Naive thymus-derived CD4-positive, alpha-beta T cell (primary cell): ENCODE measurements at regions of chr6 and their contacts with region 1.

Region 1: DNA sequence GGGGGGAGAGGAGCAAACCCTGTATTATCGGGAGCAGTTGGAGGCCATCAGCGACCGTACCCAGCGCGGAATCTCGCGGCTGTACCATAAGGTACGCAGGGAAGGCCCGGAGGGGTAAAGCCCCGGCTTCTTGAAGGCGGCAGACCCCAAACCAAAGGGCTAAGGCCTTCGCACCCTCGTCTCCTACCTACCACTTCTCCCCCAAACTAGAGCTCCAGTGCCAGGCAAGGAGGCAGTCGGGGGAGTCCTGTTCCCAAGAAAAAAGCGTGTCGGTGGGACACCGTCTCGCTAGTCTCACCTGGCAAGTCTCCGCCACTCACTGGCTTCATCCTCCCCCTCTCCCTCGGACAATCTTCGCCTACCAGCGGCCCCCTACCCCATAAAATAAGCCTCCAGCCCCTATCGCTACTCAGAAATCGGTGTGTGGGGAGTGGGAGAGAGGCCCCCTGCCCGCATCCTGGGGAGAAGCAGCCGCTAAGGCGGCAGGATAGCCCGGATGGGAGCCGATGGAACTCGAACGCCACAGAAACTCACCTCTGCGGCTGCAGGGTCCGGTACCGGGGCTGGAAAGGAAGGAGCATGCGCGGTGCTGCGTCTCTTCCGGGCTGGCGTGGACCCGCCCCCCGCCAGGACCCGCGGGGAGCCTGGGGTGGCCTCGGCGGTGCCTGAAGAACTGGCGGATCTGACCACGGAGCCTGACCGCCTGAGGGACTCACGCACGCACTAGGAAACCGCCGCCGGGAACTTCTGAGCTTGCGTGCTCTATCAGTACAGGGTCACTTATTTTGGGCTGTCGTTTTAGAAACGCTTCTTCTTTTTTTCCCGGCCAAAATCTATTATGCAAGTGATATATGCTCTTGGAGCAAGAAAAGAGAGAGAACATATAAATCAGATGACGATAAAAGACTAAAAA is at the start of gene RPS10:
- DNase-seq: peak; percentile 80 to 94 (median 88)
- ATAC-seq: peak; percentile 100
- H3K4me3 ChIP-seq: peak within 1 kb of the TSS; percentile 98
- H3K4me3 Mint-ChIP-seq: peak within 1 kb of the TSS; percentile 93 to 99 (median 97)
- H3K27ac ChIP-seq: peak within 1 kb of the TSS; percentile 93
- H3K27ac Mint-ChIP-seq: peak within 1 kb of the TSS; percentile 95 to 99 (median 98)
- H3K4me1 ChIP-seq: peaks cover 7 to 18% of the 10 kb centered on the region in 2 donors
- H3K4me1 Mint-ChIP-seq: peaks cover 13 to 43% (median 31%) of the 10 kb centered on the region in 7 donors
- H3K27me3 ChIP-seq: no peaks in the 10 kb centered on the region
- H3K27me3 Mint-ChIP-seq: peaks cover 0 to 3% (median 0%) of the 10 kb centered on the region in 5 donors
- total RNA-seq, gene RPS10: 1,466 to 3,151 (median 2,905) TPM

Region 2: DNA sequence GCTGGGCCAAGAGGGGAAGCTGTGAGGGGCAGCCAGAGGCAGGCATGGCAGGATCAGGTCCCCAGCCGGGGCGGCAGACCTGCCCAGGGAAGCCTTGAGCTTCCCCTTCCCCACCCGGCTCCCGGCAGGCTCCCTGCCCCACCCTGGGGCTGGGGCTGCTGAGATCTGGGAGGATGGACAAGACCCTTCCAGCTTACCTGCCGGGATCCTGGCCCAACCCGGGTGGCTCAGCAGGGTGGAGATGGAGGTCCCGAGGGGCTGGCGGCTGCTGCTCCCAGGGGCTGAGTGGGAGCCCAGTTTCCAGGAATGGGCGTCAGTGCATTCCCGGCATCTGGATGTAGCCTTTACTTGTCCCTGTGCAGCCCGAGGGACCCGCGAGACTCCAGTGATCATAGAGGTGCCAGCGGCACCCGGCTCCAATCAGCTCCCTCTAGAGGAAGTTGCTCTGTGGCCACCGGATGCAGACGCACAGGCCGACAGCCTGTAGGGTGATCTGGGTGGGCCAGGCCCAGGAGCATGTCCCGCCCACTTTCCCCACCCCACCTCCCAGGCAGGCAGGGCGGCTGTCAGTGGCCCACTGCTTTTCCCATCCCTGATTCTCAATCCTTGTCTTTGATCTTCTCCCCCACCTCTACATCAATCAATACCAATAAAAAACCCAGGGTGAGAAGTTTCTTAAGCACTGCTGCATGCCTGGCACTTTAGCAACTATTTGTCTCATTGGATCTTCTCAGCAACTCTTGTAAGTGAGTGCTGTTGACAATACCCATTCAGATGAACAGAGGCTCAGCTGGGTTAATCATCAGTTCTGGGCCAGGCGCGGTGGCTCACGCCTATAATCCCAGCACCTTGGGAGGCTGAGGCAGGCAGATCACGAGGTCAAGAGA is 845.7 kb before region 1 on chr6 and contains the start of gene BAK1:
- CTCF ChIA-PET with region 1: no interaction called
- POLR2A ChIA-PET with region 1: no interaction called
- intact Hi-C with region 1: no loop called
- DNase-seq: peak; percentile 54 to 86 (median 78)
- ATAC-seq: peak; percentile 98
- H3K4me3 ChIP-seq: peak within 1 kb of the TSS; percentile 92
- H3K4me3 Mint-ChIP-seq: peak within 1 kb of the TSS; percentile 93 to 99 (median 96)
- H3K27ac ChIP-seq: peak within 1 kb of the TSS; percentile 83
- H3K27ac Mint-ChIP-seq: peak within 1 kb of the TSS; percentile 94 to 99 (median 97)
- H3K4me1 ChIP-seq: peaks cover 13 to 25% of the 10 kb centered on the region in 2 donors
- H3K4me1 Mint-ChIP-seq: peaks cover 26 to 43% (median 39%) of the 10 kb centered on the region in 7 donors
- H3K27me3 ChIP-seq: no peaks in the 10 kb centered on the region
- H3K27me3 Mint-ChIP-seq: no peaks in the 10 kb centered on the region
- total RNA-seq, gene BAK1: 16.9 to 78.8 (median 22.0) TPM

Region 3: GRCh38 chr6:34223956-34224940 is 201.5 kb before region 1 on chr6:
- CTCF ChIA-PET with region 1: interaction called, 3 read pairs
- POLR2A ChIA-PET with region 1: interaction called, 12 read pairs
- intact Hi-C with region 1: no loop called
- DNase-seq: peak; percentile 85 to 97 (median 91)
- ATAC-seq: peak; percentile 99
- H3K4me3 ChIP-seq: peak overlapping the region; percentile 78
- H3K4me3 Mint-ChIP-seq: peak overlapping the region; percentile 42 to 85 (median 76)
- H3K27ac ChIP-seq: peak overlapping the region; percentile 93
- H3K27ac Mint-ChIP-seq: peak overlapping the region; percentile 82 to 95 (median 88)
- H3K4me1 ChIP-seq: peaks cover 4 to 14% of the 10 kb centered on the region in 2 donors
- H3K4me1 Mint-ChIP-seq: peaks cover 5 to 40% (median 10%) of the 10 kb centered on the region in 7 donors
- H3K27me3 ChIP-seq: no peaks in the 10 kb centered on the region
- H3K27me3 Mint-ChIP-seq: no peaks in the 10 kb centered on the region

Region 4: GRCh38 chr6:34392497-34393190 is 33.1 kb before region 1 on chr6 and contains the start of gene NUDT3:
- CTCF ChIA-PET with region 1: no interaction called
- POLR2A ChIA-PET with region 1: no interaction called
- intact Hi-C with region 1: loop called (anchors 2 kb)
- DNase-seq: peak; percentile 88 to 98 (median 93)
- ATAC-seq: peak; percentile 93
- H3K4me3 ChIP-seq: peak within 1 kb of the TSS; percentile 92
- H3K4me3 Mint-ChIP-seq: peak within 1 kb of the TSS in 4 of 10 donors; percentile 79 to 99 (median 98)
- H3K27ac ChIP-seq: peak within 1 kb of the TSS; percentile 85
- H3K27ac Mint-ChIP-seq: peak within 1 kb of the TSS in 8 of 9 donors; percentile 89 to 95 (median 92)
- H3K4me1 ChIP-seq: peaks cover 11 to 16% of the 10 kb centered on the region in 2 donors
- H3K4me1 Mint-ChIP-seq: peaks cover 0 to 28% (median 23%) of the 10 kb centered on the region in 7 donors
- H3K27me3 ChIP-seq: no peaks in the 10 kb centered on the region
- H3K27me3 Mint-ChIP-seq: peaks cover 0 to 2% (median 0%) of the 10 kb centered on the region in 5 donors
- total RNA-seq, gene NUDT3: 16.2 to 29.7 (median 25.4) TPM

Region 5: GRCh38 chr6:34414999-34415858 is 10.5 kb before region 1 on chr6:
- CTCF ChIA-PET with region 1: interaction called, 8 read pairs
- POLR2A ChIA-PET with region 1: interaction called, 17 read pairs
- intact Hi-C with region 1: no loop called
- DNase-seq: peak in 7 of 9 donors; percentile 38 to 63 (median 56)
- ATAC-seq: peak; percentile 88
- H3K4me3 ChIP-seq: no peak overlapping the region
- H3K4me3 Mint-ChIP-seq: no peak overlapping the region
- H3K27ac ChIP-seq: no peak overlapping the region
- H3K27ac Mint-ChIP-seq: peak overlapping the region in 4 of 9 donors; percentile 17 to 56 (median 45)
- H3K4me1 ChIP-seq: no peaks in the 10 kb centered on the region
- H3K4me1 Mint-ChIP-seq: peaks cover 0 to 17% (median 9%) of the 10 kb centered on the region in 7 donors
- H3K27me3 ChIP-seq: no peaks in the 10 kb centered on the region
- H3K27me3 Mint-ChIP-seq: no peaks in the 10 kb centered on the region

Region 6: DNA sequence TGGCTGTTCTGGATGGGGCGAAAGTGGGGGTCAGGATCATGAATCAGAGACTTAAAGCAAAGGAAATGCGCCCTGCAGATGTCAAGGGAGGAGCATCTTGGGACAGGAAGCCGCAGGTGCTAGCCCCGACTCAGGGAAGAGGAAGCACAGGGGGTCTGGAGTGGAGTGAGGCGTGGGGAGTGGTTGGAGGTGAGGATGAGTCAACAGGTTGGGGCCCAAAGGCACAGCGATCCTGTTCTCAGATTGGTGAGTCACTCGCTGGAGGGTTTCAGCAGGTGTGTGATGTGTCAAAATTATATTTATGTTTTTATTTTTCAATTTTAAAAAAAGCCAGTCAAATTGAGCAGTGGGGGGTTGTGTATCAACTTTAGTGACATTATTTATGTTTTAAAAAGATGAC is 59.1 kb after region 1 on chr6:
- CTCF ChIA-PET with region 1: no interaction called
- POLR2A ChIA-PET with region 1: no interaction called
- intact Hi-C with region 1: no loop called
- DNase-seq: peak in 5 of 9 donors; percentile 6 to 63 (median 14)
- ATAC-seq: peak; percentile 74
- H3K4me3 ChIP-seq: no peak overlapping the region
- H3K4me3 Mint-ChIP-seq: peak overlapping the region; percentile 23 to 81 (median 64)
- H3K27ac ChIP-seq: peak overlapping the region; percentile 27
- H3K27ac Mint-ChIP-seq: peak overlapping the region; percentile 26 to 89 (median 73)
- H3K4me1 ChIP-seq: peaks cover 21 to 31% of the 10 kb centered on the region in 2 donors
- H3K4me1 Mint-ChIP-seq: peaks cover 16 to 35% (median 29%) of the 10 kb centered on the region in 7 donors
- H3K27me3 ChIP-seq: no peaks in the 10 kb centered on the region
- H3K27me3 Mint-ChIP-seq: no peaks in the 10 kb centered on the region

Region 7: DNA sequence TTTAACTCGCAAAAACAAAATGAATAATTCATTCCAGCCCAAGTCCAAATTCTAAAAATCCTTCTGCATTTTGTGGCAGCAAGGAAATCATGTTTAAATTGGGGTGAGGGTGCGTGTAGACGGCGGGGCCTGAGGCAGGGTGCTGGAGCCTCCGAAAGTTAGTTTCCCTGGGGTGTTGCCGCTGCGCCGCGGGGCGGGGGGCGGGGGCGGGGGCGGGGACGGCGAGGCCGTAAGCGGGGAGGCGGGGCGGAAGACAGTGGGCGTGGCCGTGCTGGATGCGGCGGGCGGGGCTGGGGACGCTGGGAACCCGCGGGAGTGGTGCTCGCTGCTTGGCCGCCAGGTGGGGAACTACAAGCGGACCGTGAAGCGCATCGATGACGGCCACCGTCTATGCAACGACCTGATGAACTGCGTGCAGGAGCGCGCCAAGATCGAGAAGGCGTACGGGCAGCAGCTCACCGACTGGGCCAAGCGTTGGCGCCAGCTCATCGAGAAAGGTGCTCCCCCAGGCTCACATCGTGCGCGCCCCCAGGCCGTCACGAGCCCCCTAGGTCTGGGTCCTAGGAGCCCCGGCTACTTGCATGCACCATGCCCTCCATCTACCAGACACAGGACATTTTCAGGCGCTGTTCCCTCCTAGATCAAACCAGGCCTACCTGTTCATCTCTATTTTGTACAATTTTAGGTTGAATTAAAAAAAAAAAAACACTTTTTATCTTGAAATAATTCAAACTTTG is 101.4 kb after region 1 on chr6:
- CTCF ChIA-PET with region 1: no interaction called
- POLR2A ChIA-PET with region 1: interaction called, 4 read pairs
- intact Hi-C with region 1: loop called in 1 of 2 experiments (anchors 2 kb)
- DNase-seq: peak; percentile 88 to 96 (median 94)
- ATAC-seq: peak; percentile 100
- H3K4me3 ChIP-seq: peak overlapping the region; percentile 33
- H3K4me3 Mint-ChIP-seq: peak overlapping the region; percentile 20 to 69 (median 46)
- H3K27ac ChIP-seq: peak overlapping the region; percentile 70
- H3K27ac Mint-ChIP-seq: peak overlapping the region; percentile 12 to 89 (median 72)
- H3K4me1 ChIP-seq: peaks cover 7 to 14% of the 10 kb centered on the region in 2 donors
- H3K4me1 Mint-ChIP-seq: peaks cover 4 to 12% (median 8%) of the 10 kb centered on the region in 7 donors
- H3K27me3 ChIP-seq: no peaks in the 10 kb centered on the region
- H3K27me3 Mint-ChIP-seq: peaks cover 0 to 2% (median 0%) of the 10 kb centered on the region in 5 donors

Region 8: GRCh38 chr6:34696739-34697543 is 271.2 kb after region 1 on chr6 and contains the start of gene ILRUN:
- CTCF ChIA-PET with region 1: no interaction called
- POLR2A ChIA-PET with region 1: no interaction called
- intact Hi-C with region 1: loop called in 1 of 2 experiments (anchors 5 kb)
- DNase-seq: peak; percentile 88 to 97 (median 93)
- ATAC-seq: peak; percentile 96
- H3K4me3 ChIP-seq: peak within 1 kb of the TSS; percentile 88
- H3K4me3 Mint-ChIP-seq: peak within 1 kb of the TSS; percentile 95 to 99 (median 98)
- H3K27ac ChIP-seq: peak within 1 kb of the TSS; percentile 94
- H3K27ac Mint-ChIP-seq: peak within 1 kb of the TSS; percentile 88 to 100 (median 99)
- H3K4me1 ChIP-seq: peaks cover 17 to 20% of the 10 kb centered on the region in 2 donors
- H3K4me1 Mint-ChIP-seq: peaks cover 30 to 60% (median 51%) of the 10 kb centered on the region in 7 donors
- H3K27me3 ChIP-seq: no peaks in the 10 kb centered on the region
- H3K27me3 Mint-ChIP-seq: peaks cover 0 to 4% (median 0%) of the 10 kb centered on the region in 5 donors
- total RNA-seq, gene ILRUN: 45.2 to 74.6 (median 53.7) TPM

Region 9: GRCh38 chr6:34746104-34746846 is 320.5 kb after region 1 on chr6:
- CTCF ChIA-PET with region 1: no interaction called
- POLR2A ChIA-PET with region 1: no interaction called
- intact Hi-C with region 1: no loop called
- DNase-seq: no peak
- ATAC-seq: no peak
- H3K4me3 ChIP-seq: no peak overlapping the region
- H3K4me3 Mint-ChIP-seq: no peak overlapping the region
- H3K27ac ChIP-seq: no peak overlapping the region
- H3K27ac Mint-ChIP-seq: no peak overlapping the region
- H3K4me1 ChIP-seq: no peaks in the 10 kb centered on the region
- H3K4me1 Mint-ChIP-seq: no peaks in the 10 kb centered on the region
- H3K27me3 ChIP-seq: no peaks in the 10 kb centered on the region
- H3K27me3 Mint-ChIP-seq: no peaks in the 10 kb centered on the region

Region 10: DNA sequence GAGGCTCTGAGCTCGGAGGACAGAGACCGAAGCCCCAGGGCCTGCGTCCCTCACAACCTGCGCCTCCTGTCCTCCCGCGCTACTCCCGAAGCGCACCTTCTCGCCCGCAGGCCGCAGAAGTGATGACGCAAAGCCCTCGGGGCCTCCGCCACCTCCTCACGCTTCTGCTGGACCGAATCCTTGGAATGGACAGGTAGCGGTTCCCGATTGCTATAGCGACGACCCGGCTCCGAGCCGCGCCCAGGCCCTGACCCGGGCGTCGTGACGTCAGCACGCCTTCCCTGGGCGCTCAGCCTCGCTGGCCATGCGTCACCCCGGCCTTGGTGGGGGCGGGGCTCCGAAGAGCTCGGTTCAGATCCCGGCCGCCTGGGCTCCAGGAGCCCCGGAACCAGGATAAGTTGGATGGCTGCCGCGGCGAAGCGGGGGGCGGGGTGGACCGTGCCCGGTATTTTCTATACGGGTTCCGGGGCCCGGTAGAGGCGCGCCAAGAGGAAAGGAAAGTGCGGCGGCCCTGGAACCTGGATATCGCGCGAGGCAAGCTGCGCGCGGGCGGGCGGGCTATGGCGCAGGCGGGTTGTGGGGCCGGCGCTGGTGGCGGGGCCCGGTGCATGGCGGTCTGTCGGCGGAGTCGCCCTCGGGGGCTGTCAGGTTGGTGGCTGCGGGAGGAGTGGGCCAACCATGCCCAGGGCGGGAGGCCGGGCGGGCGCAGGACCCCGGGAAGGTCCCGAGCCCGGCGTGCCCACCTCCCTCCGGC is 833.6 kb after region 1 on chr6 and contains the start of gene ZNF76:
- CTCF ChIA-PET with region 1: no interaction called
- POLR2A ChIA-PET with region 1: no interaction called
- intact Hi-C with region 1: loop called in 1 of 2 experiments (anchors 5 kb)
- DNase-seq: peak; percentile 89 to 93 (median 92)
- ATAC-seq: peak; percentile 88
- H3K4me3 ChIP-seq: peak within 1 kb of the TSS; percentile 65
- H3K4me3 Mint-ChIP-seq: peak within 1 kb of the TSS; percentile 85 to 99 (median 97)
- H3K27ac ChIP-seq: peak within 1 kb of the TSS; percentile 95
- H3K27ac Mint-ChIP-seq: peak within 1 kb of the TSS; percentile 89 to 99 (median 97)
- H3K4me1 ChIP-seq: peaks cover 15 to 17% of the 10 kb centered on the region in 2 donors
- H3K4me1 Mint-ChIP-seq: peaks cover 37 to 64% (median 50%) of the 10 kb centered on the region in 7 donors
- H3K27me3 ChIP-seq: no peaks in the 10 kb centered on the region
- H3K27me3 Mint-ChIP-seq: no peaks in the 10 kb centered on the region
- total RNA-seq, gene ZNF76: 44.4 to 110 (median 77.2) TPM